ENCODE measurements at regions of chr3 and their contacts with region 1.

Region 1: DNA sequence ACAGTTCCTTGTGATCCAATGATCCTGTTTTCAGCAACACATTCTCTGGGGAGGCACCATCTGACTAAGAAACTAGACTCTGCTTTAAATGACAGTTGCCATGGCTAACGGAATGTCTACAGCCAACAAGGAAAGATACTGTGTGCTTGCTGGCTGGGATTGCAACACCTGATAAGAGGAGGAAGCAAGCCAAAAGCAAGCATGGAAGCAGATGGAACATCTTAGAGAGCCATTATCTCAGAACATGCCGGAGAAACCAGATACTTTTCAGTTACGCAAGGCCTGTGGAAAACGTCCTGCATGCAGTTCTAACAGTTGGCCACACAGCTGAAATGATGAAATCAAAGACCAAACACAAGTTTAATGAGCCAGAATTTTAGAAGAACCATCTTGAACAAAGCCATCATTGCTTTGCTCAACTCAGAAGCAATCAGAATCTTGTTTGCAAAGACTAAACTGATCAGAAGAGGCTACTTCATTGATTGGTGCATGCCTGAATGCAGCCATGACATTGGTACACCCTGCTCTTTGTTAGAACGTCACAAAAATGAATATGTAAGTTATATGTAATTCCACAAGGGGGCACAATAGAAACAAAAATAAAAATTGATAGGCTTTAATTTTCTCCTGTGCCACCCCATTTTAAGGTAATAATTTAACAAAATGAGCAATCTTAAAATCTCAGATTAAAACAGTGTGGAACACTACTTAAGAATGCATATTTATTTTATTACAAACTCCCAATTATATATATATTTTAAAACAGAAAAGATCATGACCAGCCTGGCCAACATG is 50.8 kb downstream of the GXYLT2 start:
- DNase-seq: peak; percentile 85 to 86
- H3K4me3 ChIP-seq: no peak overlapping the region
- H3K4me3 Mint-ChIP-seq: peak overlapping the region; percentile 55
- H3K27ac Mint-ChIP-seq: peak overlapping the region; percentile 77
- H3K4me1 ChIP-seq: peaks cover 12% of the 10 kb centered on the region
- H3K4me1 Mint-ChIP-seq: peaks cover 16% of the 10 kb centered on the region
- H3K27me3 ChIP-seq: no peaks in the 10 kb centered on the region
- H3K27me3 Mint-ChIP-seq: no peaks in the 10 kb centered on the region
- CTCF ChIP-seq: peak; percentile 41 to 74

Region 2: DNA sequence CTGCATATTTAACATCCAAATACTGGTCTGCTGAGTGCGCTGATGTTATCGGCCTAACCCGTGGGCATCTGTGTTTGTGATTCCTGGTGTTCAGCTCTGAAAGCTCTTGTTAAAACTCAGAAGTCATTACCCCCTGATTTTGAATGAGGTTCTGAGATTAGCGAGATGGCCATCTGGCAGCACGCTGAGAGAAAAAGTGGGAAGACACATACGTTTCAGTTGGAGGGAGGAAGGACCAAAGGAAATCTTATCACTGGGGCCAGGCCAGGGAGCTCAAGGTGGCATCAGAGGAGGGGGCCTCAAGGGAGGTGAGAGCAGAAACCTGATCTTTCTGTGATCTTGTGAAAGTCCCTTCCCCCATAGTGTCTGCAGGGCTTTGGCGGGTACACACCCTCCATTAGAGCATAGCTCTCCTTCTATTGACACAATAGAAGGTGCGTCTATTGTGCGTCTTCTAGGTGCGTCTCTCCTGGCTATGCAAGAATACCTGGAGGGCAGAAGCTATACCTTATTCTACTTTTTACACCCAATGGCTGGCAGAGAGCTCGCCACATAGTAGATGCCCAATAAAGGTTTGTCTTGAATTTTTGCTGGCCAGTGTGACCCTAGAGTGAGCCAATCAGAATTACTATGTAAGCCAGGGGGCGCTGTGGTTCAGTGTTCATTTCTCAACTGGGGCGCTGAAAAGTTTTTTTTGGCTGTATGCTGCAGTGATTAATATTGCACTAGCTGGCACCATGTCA is 272.8 kb before region 1 on chr3:
- CTCF ChIA-PET with region 1: no interaction called
- POLR2A ChIA-PET with region 1: no interaction called
- intact Hi-C with region 1: loop called (anchors 2 kb)
- DNase-seq: peak in 1 of 2 experiments; percentile 67
- H3K4me3 ChIP-seq: no peak overlapping the region
- H3K4me3 Mint-ChIP-seq: no peak overlapping the region
- H3K27ac Mint-ChIP-seq: no peak overlapping the region
- H3K4me1 ChIP-seq: no peaks in the 10 kb centered on the region
- H3K4me1 Mint-ChIP-seq: no peaks in the 10 kb centered on the region
- H3K27me3 ChIP-seq: no peaks in the 10 kb centered on the region
- H3K27me3 Mint-ChIP-seq: no peaks in the 10 kb centered on the region
- CTCF ChIP-seq: peak; percentile 49 to 57

Region 3: GRCh38 chr3:72836923-72837322 is 101.7 kb before region 1 on chr3:
- CTCF ChIA-PET with region 1: no interaction called
- POLR2A ChIA-PET with region 1: no interaction called
- intact Hi-C with region 1: no loop called
- DNase-seq: no peak
- H3K4me3 ChIP-seq: no peak overlapping the region
- H3K4me3 Mint-ChIP-seq: no peak overlapping the region
- H3K27ac Mint-ChIP-seq: no peak overlapping the region
- H3K4me1 ChIP-seq: no peaks in the 10 kb centered on the region
- H3K4me1 Mint-ChIP-seq: no peaks in the 10 kb centered on the region
- H3K27me3 ChIP-seq: no peaks in the 10 kb centered on the region
- H3K27me3 Mint-ChIP-seq: no peaks in the 10 kb centered on the region
- CTCF ChIP-seq: no peak

Region 4: DNA sequence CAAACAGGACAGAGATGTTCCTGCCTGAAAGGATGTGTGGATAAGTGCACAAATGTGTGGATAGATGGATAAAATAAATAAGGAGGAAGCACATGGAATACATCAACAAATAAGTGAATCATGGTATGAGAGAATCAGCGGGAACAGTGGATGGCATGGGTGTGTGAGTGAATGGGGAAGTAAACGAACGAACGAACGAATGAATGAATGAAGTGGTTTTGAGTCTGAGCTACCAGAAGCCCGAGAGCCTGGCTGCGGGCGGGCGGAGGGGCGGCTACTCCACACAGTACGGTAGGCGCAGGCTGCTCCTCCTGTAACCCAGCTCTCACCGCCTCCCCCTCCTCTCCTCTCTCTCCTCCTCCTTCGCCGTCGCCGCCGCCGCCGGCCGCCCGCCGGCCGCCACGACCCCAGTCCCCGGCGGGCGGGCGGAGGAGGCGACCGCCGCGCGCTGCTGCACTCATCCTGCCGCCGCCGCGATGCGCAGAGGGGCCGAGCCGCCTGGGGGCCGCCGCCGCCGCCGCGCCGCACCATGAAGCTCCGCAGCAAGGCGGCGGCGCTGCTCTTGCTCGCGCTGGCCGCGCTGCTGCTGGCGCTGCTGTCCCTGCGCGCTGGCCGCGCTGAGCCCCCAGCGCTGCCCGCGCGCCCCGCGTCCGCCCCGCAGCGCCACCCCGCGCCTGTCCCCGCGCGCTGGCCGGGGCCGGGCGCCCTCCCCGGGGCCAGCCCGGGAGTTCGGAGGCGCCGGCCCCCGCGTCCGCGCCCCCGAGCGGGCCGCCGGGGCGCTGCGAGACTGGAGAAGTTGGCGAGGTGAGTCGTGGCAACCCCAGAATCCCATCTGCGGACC is 50.7 kb before region 1 on chr3 and contains the start of gene GXYLT2:
- CTCF ChIA-PET with region 1: no interaction called
- POLR2A ChIA-PET with region 1: no interaction called
- intact Hi-C with region 1: loop called (anchors 1 kb)
- DNase-seq: peak; percentile 74
- H3K4me3 ChIP-seq: peak within 1 kb of the TSS; percentile 58
- H3K4me3 Mint-ChIP-seq: peak within 1 kb of the TSS; percentile 94
- H3K27ac Mint-ChIP-seq: peak within 1 kb of the TSS; percentile 33
- H3K4me1 ChIP-seq: peaks cover 4% of the 10 kb centered on the region; the same call in 1 of the 2 replicates
- H3K4me1 Mint-ChIP-seq: peaks cover 12% of the 10 kb centered on the region
- H3K27me3 ChIP-seq: no peaks in the 10 kb centered on the region
- H3K27me3 Mint-ChIP-seq: no peaks in the 10 kb centered on the region
- CTCF ChIP-seq: no peak
- total RNA-seq, gene GXYLT2: 3.4 and 4.8 TPM in 2 replicates

Region 5: DNA sequence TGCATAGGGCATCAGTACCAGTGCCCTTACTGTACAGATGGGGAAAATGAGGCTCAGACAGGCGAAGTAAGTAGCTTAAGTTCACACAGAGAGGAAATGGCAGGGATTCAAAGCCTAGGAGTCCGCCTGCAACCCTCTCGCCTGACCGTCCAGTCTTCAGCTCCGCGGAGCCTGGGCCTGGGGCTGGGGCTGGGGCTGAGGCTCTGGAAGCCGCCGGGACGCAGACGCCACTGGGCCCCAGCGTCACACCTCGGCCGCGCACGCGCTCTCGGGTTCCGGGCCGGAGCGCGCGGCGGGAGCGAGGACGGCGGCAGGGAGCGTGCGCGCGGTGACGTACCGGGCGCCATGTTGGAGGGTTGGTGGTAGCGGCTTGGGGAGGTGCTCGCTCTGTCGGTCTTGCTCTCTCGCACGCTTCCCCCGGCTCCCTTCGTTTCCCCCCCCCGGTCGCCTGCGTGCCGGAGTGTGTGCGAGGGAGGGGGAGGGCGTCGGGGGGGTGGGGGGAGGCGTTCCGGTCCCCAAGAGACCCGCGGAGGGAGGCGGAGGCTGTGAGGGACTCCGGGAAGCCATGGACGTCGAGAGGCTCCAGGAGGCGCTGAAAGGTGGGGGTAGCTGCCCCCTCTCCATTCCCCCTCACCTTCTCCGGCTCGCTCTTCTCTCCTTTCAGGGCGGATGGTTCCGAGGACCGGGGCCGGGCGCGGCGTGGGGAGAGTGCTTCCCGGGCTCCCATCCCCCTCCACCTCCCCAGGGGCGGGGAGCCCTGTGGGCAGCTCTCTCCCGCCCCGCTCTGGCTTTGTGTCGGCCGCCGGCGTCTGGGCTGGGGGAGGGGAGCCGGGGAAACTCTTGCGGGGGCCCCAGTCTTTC is 58.0 kb after region 1 on chr3 and contains the start of gene PPP4R2:
- CTCF ChIA-PET with region 1: interaction called, 8 read pairs
- POLR2A ChIA-PET with region 1: no interaction called
- intact Hi-C with region 1: loop called (anchors 1 kb)
- DNase-seq: peak; percentile 90 to 94
- H3K4me3 ChIP-seq: peak within 1 kb of the TSS; percentile 91
- H3K4me3 Mint-ChIP-seq: peak within 1 kb of the TSS; percentile 98
- H3K27ac Mint-ChIP-seq: peak within 1 kb of the TSS; percentile 90
- H3K4me1 ChIP-seq: peaks cover 29% of the 10 kb centered on the region
- H3K4me1 Mint-ChIP-seq: peaks cover 25% of the 10 kb centered on the region
- H3K27me3 ChIP-seq: no peaks in the 10 kb centered on the region
- H3K27me3 Mint-ChIP-seq: no peaks in the 10 kb centered on the region
- CTCF ChIP-seq: peak in 1 of 2 experiments; percentile 0
- total RNA-seq, gene PPP4R2: 91.3 and 93.6 TPM in 2 replicates

Region 6: DNA sequence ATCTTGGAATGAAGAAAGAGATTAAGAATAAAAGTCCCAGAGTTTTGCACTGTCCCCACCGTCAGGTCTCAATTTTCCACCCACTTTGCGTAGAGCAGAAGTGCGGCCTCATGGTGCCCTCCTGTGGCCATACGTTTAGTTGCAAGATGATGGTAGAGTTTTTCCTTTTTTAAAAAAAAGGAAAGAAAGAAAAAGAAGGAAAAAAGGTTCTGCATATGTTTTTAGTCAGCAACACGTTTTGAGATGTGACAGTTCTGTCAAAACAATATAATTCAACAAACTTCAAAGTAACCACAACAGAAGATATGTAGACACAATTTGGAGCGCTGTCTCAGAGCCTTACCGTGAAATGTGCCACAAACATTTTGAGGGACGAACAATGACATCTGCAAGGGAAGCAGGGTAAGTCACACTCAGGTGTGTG is 147.4 kb after region 1 on chr3:
- CTCF ChIA-PET with region 1: no interaction called
- POLR2A ChIA-PET with region 1: no interaction called
- intact Hi-C with region 1: loop called (anchors 1 kb)
- DNase-seq: peak in 1 of 2 experiments; percentile 59
- H3K4me3 ChIP-seq: no peak overlapping the region
- H3K4me3 Mint-ChIP-seq: no peak overlapping the region
- H3K27ac Mint-ChIP-seq: no peak overlapping the region
- H3K4me1 ChIP-seq: no peaks in the 10 kb centered on the region
- H3K4me1 Mint-ChIP-seq: no peaks in the 10 kb centered on the region
- H3K27me3 ChIP-seq: no peaks in the 10 kb centered on the region
- H3K27me3 Mint-ChIP-seq: no peaks in the 10 kb centered on the region
- CTCF ChIP-seq: peak; percentile 79 to 85